ENCODE measurements at regions of chr4 and their contacts with region 1.

Region 1: DNA sequence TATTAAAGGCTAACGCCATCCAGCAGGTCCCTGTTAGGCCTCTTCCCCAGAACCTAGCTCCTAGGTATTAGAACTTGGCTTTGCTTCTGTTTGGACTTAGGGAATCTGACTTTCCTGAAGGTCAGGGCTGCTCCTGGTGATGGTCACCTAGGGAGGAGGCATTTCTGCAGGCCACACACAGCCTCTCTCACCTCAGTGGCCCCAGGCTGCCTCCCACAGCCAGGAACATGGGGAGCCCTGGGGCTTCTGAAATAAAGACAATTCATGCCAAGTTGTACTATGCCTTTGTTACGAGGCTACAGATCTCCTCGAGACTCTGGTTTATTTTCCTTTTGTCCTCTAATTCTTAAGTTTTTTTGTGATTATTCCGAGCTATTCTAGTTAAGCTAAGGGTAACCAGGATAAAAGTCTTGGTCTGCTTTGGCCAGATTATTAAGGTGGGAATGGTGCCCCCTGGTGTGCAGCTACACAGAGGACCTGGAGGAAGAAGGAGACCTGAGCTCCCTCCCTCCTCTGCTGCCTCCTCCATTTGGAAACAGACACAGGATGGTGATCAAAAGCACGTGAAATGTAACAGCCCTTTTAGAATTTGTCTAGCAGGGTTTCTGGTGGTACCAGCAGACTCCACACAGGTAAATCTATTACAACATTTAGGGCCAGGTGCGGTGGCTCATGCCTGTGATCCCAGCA is 131.0 kb downstream of the DCLK2 start:
- DNase-seq: peak; percentile 48
- CTCF ChIP-seq: peak; percentile 65

Region 2: DNA sequence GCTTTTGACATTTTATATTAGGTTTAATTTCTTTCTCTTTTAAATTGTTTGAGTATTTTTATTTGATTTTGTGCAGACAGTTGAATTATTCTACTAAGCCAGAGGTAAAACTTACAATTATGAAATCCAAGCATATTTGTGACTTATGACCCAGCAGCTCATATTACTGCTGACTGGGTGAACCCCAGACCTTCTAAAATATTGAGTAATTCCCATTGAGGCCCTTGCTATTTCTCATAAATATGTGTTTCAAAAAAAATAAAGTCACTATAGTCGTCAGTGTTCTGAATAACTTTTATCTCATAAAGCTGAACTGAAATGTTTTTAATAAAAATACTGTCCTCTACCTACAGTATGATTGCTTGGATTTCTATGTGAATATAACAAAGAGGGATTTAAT is 696.8 kb before region 1 on chr4:
- in situ Hi-C with region 1: no loop called
- DNase-seq: no peak
- CTCF ChIP-seq: no peak

Region 3: GRCh38 chr4:150010525-150011126 is 198.7 kb before region 1 on chr4:
- in situ Hi-C with region 1: loop called (anchors 25 kb)
- DNase-seq: peak; percentile 13
- CTCF ChIP-seq: peak; percentile 50